ENCODE measurements at regions of chr1 and their contacts with region 1.

Region 1: GRCh38 chr1:207885129-207886032 is 25.5 kb downstream of the CD34 start:
- DNase-seq: no peak
- ATAC-seq: peak; percentile 91
- H3K4me3 ChIP-seq: no peak overlapping the region
- H3K27ac ChIP-seq: no peak overlapping the region
- H3K4me1 ChIP-seq: peaks cover 12% of the 10 kb centered on the region
- H3K27me3 ChIP-seq: no peaks in the 10 kb centered on the region
- CTCF ChIP-seq: peak; percentile 87 to 95 (median 95)
- EP300 ChIP-seq: no peak
- POLR2A ChIP-seq: no peak
- RAD21 ChIP-seq: peak; percentile 78

Region 2: GRCh38 chr1:207711285-207711684 is 174.1 kb before region 1 on chr1:
- CTCF ChIA-PET with region 1: no interaction called
- POLR2A ChIA-PET with region 1: no interaction called
- RAD21 ChIA-PET with region 1: no interaction called
- SMC1A ChIA-PET with region 1: no interaction called
- in situ Hi-C with region 1: no loop called
- intact Hi-C with region 1: no loop called
- DNase-seq: no peak
- ATAC-seq: peak; percentile 41; the same call in 2 of the 3 replicates
- H3K4me3 ChIP-seq: no peak overlapping the region
- H3K27ac ChIP-seq: no peak overlapping the region
- H3K4me1 ChIP-seq: no peaks in the 10 kb centered on the region
- H3K27me3 ChIP-seq: no peaks in the 10 kb centered on the region; a peak in 2 of 4 replicates
- CTCF ChIP-seq: peak in 2 of 3 experiments; percentile 1 to 10; a peak in 1 of 6 replicates
- EP300 ChIP-seq: no peak
- POLR2A ChIP-seq: no peak
- RAD21 ChIP-seq: no peak

Region 3: GRCh38 chr1:207828485-207829158 is 56.8 kb before region 1 on chr1:
- CTCF ChIA-PET with region 1: interaction called, 137 read pairs
- POLR2A ChIA-PET with region 1: interaction called, 22 read pairs
- RAD21 ChIA-PET with region 1: interaction called, 160 read pairs
- SMC1A ChIA-PET with region 1: interaction called, 164 read pairs
- in situ Hi-C with region 1: no loop called
- intact Hi-C with region 1: no loop called
- DNase-seq: peak; percentile 81
- ATAC-seq: peak; percentile 37
- H3K4me3 ChIP-seq: no peak overlapping the region
- H3K27ac ChIP-seq: peak overlapping the region; percentile 10
- H3K4me1 ChIP-seq: peaks cover 64% of the 10 kb centered on the region
- H3K27me3 ChIP-seq: no peaks in the 10 kb centered on the region
- CTCF ChIP-seq: peak; percentile 83 to 95 (median 93)
- EP300 ChIP-seq: no peak
- POLR2A ChIP-seq: no peak
- RAD21 ChIP-seq: peak; percentile 96

Region 4: DNA sequence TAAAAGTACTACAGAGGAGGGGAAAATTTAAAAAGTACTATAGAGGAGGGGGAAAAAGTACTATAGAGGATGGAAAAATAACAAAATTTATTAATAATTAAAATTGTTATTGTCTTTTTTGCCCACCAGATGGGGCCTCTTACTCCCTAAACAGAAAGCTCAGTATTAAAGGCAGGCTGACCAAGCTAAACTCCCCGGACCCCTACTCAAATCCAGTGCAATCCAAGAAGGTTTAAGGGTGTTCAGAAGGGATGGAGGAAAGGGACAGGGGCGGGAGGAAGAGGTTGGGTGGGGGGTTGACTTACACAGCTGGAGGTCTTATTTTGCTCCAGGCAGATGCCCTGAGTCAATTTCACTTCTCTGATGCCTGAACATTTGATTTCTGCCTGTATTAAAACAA is 11.8 kb after region 1 on chr1:
- CTCF ChIA-PET with region 1: interaction called, 162 read pairs
- POLR2A ChIA-PET with region 1: interaction called, 4 read pairs
- RAD21 ChIA-PET with region 1: interaction called, 47 read pairs
- SMC1A ChIA-PET with region 1: interaction called, 81 read pairs
- in situ Hi-C with region 1: no loop called
- intact Hi-C with region 1: no loop called
- DNase-seq: no peak
- ATAC-seq: peak; percentile 43
- H3K4me3 ChIP-seq: no peak overlapping the region
- H3K27ac ChIP-seq: no peak overlapping the region
- H3K4me1 ChIP-seq: no peaks in the 10 kb centered on the region; the same call in 1 of the 2 replicates
- H3K27me3 ChIP-seq: peaks cover 0 to 2% of the 10 kb centered on the region in 2 experiments; a peak in 1 of 4 replicates
- CTCF ChIP-seq: peak in 2 of 3 experiments; percentile 29 to 39; a peak in 4 of 6 replicates
- EP300 ChIP-seq: no peak
- POLR2A ChIP-seq: no peak
- RAD21 ChIP-seq: peak; percentile 53

Region 5: GRCh38 chr1:207941665-207942064 is 56.3 kb after region 1 on chr1:
- CTCF ChIA-PET with region 1: interaction called, 19 read pairs
- POLR2A ChIA-PET with region 1: interaction called, 7 read pairs
- RAD21 ChIA-PET with region 1: interaction called, 8 read pairs
- SMC1A ChIA-PET with region 1: interaction called, 10 read pairs
- in situ Hi-C with region 1: no loop called
- intact Hi-C with region 1: no loop called
- DNase-seq: no peak
- ATAC-seq: no peak
- H3K4me3 ChIP-seq: no peak overlapping the region
- H3K27ac ChIP-seq: no peak overlapping the region
- H3K4me1 ChIP-seq: no peaks in the 10 kb centered on the region
- H3K27me3 ChIP-seq: no peaks in the 10 kb centered on the region
- CTCF ChIP-seq: no peak
- EP300 ChIP-seq: no peak
- POLR2A ChIP-seq: no peak
- RAD21 ChIP-seq: no peak

Region 6: DNA sequence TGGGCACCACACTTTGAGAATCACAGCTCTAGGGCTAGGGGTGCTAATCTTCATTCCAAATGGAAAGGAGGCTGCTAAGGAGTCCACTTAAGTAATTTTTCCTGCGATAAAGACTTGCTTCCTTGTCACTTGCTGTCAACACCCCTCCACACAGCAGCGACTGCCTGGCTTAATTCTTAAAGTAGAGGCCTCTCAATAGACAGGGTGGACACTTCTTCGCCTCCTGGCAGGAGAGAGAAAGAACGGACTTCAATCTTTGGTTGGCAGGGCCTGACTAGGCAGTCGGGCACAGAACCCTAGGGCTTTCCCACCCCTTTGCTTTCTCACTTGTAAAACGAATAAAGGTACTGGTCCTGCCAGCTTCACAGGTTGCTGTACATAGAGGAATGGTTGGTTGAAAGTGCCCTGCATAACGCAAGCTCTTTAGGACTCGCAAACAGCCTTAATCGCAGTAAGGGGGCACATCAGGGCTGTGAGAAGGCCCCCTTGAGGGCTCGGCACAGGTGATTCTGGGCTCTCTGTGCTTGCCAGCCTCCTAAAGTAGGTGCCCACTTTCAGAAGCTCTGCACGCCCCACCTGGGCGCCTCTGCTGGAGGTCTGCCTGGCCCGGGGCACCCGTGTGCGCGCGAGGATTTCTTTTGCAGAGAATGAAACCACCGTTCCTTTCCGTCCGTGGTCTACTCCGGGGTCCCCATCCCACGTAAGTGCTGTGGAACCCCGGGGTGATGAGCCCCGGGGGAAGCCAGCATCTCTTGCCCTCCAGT is 73.2 kb after region 1 on chr1:
- CTCF ChIA-PET with region 1: interaction called, 228 read pairs
- POLR2A ChIA-PET with region 1: interaction called, 25 read pairs
- RAD21 ChIA-PET with region 1: interaction called, 110 read pairs
- SMC1A ChIA-PET with region 1: interaction called, 112 read pairs
- in situ Hi-C with region 1: no loop called
- intact Hi-C with region 1: loop called (anchors 1 kb)
- DNase-seq: no peak
- ATAC-seq: no peak
- H3K4me3 ChIP-seq: no peak overlapping the region
- H3K27ac ChIP-seq: no peak overlapping the region
- H3K4me1 ChIP-seq: peaks cover 4% of the 10 kb centered on the region; the same call in 1 of the 2 replicates
- H3K27me3 ChIP-seq: peaks cover 9 to 20% of the 10 kb centered on the region in 2 experiments
- CTCF ChIP-seq: no peak
- EP300 ChIP-seq: no peak
- POLR2A ChIP-seq: no peak
- RAD21 ChIP-seq: no peak

Region 7: GRCh38 chr1:207997486-207998268 is 112.3 kb after region 1 on chr1:
- CTCF ChIA-PET with region 1: interaction called, 119 read pairs
- POLR2A ChIA-PET with region 1: interaction called, 3 read pairs
- RAD21 ChIA-PET with region 1: interaction called, 50 read pairs
- SMC1A ChIA-PET with region 1: interaction called, 31 read pairs
- in situ Hi-C with region 1: no loop called
- intact Hi-C with region 1: loop called (anchors 1 kb)
- DNase-seq: no peak
- ATAC-seq: peak; percentile 99
- H3K4me3 ChIP-seq: no peak overlapping the region
- H3K27ac ChIP-seq: no peak overlapping the region
- H3K4me1 ChIP-seq: no peaks in the 10 kb centered on the region
- H3K27me3 ChIP-seq: peaks cover 2 to 3% of the 10 kb centered on the region in 2 experiments; a peak in 2 of 4 replicates
- CTCF ChIP-seq: peak; percentile 63 to 89 (median 82)
- EP300 ChIP-seq: no peak
- POLR2A ChIP-seq: no peak
- RAD21 ChIP-seq: peak; percentile 26